Head of caudate nucleus (tissue), 42 donors: ENCODE measurements at regions of chr2 and their contacts with region 1.

Region 1: DNA sequence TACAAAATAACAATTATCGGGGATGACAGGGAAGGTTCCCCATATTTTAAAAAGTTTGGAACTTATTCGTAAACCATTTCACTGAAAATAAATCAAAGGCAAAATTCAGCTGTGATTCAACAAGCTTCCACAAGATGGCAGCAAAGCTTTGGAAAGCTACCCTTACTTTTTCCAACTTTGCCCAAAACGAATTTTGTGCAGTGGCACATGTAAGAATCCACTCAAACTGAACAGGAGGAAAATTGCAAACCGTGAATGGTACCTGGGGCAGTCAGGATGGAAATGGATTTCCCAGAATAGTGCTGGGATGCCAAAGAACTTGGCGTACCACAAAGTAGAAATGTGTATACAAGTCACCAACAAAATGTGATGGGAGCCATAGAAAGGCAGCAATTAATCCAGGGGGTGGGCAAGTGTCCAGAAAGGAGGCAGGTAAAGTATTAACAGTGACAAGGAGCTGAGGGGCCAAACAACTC is 10.7 kb downstream of the RPL31 start:
- DNase-seq: peak in 21 of 42 donors; percentile 21 to 85 (median 55)

Region 2: DNA sequence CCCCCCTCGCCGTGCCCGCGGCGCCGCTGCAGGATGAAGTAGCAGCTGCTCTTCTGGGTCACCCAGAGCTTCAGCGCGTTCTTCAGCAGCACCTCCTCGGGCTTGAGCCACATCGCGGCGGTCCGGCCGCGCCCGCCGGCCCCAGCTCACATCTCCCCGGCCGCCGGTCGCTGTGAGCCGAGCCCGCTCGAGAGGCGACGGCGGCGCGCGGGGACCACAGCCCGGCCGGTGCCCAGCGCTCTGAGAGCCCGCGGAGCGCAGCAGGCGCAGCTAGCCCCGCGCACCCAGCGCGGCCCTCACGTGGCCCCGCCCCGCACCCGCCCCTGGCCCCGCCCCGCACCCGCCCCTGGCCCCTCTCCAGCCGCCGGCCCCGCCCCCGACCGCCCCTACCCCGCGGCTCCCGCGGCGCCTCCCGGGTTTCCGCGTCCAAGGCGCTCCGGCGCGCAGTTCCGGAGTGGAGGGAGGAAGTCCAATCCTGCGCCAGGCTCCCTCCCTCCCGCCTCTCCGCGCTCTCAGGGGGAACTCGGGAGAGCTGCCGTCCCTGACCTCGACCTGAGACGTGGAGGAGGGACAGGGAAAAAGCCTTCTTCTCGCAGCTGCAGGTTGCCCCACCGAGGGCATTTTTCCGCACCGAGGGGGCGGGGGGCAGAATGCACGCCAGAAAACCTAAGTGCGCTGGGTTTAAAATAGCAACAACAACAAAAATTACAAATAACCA is 138.6 kb after region 1 on chr2 and contains the start of gene TBC1D8:
- intact Hi-C with region 1: loop called (anchors 2 kb)
- DNase-seq: peak; percentile 32 to 93 (median 85)

Region 3: DNA sequence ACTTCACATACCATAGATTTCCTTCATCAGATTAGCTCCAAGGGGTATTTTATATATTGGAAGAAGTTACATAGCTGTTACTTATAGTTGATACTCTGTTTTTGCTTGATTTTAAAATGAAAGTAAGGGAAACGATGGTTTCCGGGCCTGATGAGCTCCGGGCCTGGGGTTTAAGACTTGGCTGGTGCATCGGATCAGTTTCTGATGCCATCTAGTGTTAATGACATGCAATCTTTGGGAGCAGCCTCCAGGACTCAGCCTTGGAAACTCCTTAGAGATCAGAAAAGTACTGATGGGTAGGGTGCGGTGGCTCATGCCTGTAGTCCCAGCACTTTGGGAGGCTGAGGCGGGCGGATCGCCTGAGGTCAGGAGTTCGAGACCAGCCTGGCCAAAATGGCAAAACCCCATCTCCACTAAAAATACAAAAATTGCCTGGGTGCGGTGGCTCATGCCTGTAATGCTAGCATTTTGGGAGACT is 192.8 kb after region 1 on chr2:
- intact Hi-C with region 1: loop called (anchors 5 kb)
- DNase-seq: peak; percentile 16 to 89 (median 60)